Tibial artery (tissue), 4 donors: ENCODE measurements at regions of chr20 and their contacts with region 1.

Region 1: DNA sequence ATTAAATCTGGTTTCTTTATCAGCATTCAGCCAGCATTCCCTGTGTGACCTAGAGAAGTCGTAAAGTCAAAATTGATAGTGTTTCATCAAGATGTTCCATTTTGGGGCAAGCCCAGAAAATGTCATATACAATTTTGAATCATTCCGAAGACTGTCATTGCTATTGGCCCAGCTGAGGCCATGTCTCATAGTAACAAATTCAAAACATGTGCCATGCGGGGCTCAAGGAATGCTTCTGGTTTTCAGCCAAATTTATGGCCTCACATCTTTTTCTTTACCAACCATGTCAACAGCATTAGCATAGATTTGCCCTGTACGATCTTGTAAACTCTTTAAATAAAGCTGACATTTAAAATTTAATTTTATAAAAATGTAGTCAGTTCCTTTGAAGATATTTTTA is 314.7 kb downstream of the PAX1 start:
- DNase-seq: no peak
- H3K4me3 ChIP-seq: no peak overlapping the region
- H3K27ac ChIP-seq: no peak overlapping the region
- H3K4me1 ChIP-seq: no peaks in the 10 kb centered on the region
- H3K27me3 ChIP-seq: no peaks in the 10 kb centered on the region
- CTCF ChIP-seq: no peak

Region 2: GRCh38 chr20:22004946-22005345 is 15.3 kb before region 1 on chr20:
- intact Hi-C with region 1: loop called (anchors 1 kb)
- DNase-seq: no peak
- H3K4me3 ChIP-seq: no peak overlapping the region
- H3K27ac ChIP-seq: no peak overlapping the region
- H3K4me1 ChIP-seq: no peaks in the 10 kb centered on the region
- H3K27me3 ChIP-seq: no peaks in the 10 kb centered on the region
- CTCF ChIP-seq: no peak